T-cell (primary cell): ENCODE measurements at regions of chr10 and their contacts with region 1.

Region 1: GRCh38 chr10:63157845-63158624 is 24.9 kb downstream of the NRBF2 start:
- DNase-seq: peak in 27 of 35 experiments; percentile 2 to 89 (median 31)
- ATAC-seq: peak; percentile 54 to 65 (median 60)
- H3K4me3 ChIP-seq: no peak overlapping the region
- H3K4me3 Mint-ChIP-seq: no peak overlapping the region
- H3K27ac ChIP-seq: no peak overlapping the region
- H3K27ac Mint-ChIP-seq: no peak overlapping the region
- H3K4me1 ChIP-seq: peaks cover 0 to 2% of the 10 kb centered on the region in 2 experiments
- H3K4me1 Mint-ChIP-seq: peaks cover 8 to 13% (median 9%) of the 10 kb centered on the region in 3 donors
- H3K27me3 ChIP-seq: no peaks in the 10 kb centered on the region
- H3K27me3 Mint-ChIP-seq: no peaks in the 10 kb centered on the region

Region 2: GRCh38 chr10:62437696-62438095 is 720.3 kb before region 1 on chr10:
- CTCF ChIA-PET with region 1: interaction called, 32 to 35 read pairs
- POLR2A ChIA-PET with region 1: no interaction called
- DNase-seq: peak in 7 of 35 experiments; percentile 4 to 72 (median 16)
- ATAC-seq: peak in 3 of 4 experiments; percentile 47 to 73 (median 66)
- H3K4me3 ChIP-seq: no peak overlapping the region
- H3K4me3 Mint-ChIP-seq: no peak overlapping the region
- H3K27ac ChIP-seq: no peak overlapping the region
- H3K27ac Mint-ChIP-seq: no peak overlapping the region
- H3K4me1 ChIP-seq: no peaks in the 10 kb centered on the region
- H3K4me1 Mint-ChIP-seq: peaks cover 0 to 12% (median 7%) of the 10 kb centered on the region in 3 donors
- H3K27me3 ChIP-seq: no peaks in the 10 kb centered on the region
- H3K27me3 Mint-ChIP-seq: peaks cover 3 to 4% of the 10 kb centered on the region in 2 donors

Region 3: GRCh38 chr10:62492012-62492869 is 665.8 kb before region 1 on chr10:
- CTCF ChIA-PET with region 1: interaction called, 4 to 10 read pairs
- POLR2A ChIA-PET with region 1: interaction called in 1 of 2 experiments, 6 read pairs
- DNase-seq: peak in 2 of 35 experiments; percentile 1 to 53
- ATAC-seq: peak in 2 of 4 experiments; percentile 35 to 36
- H3K4me3 ChIP-seq: no peak overlapping the region
- H3K4me3 Mint-ChIP-seq: no peak overlapping the region
- H3K27ac ChIP-seq: no peak overlapping the region
- H3K27ac Mint-ChIP-seq: no peak overlapping the region
- H3K4me1 ChIP-seq: no peaks in the 10 kb centered on the region
- H3K4me1 Mint-ChIP-seq: peaks cover 0 to 4% (median 4%) of the 10 kb centered on the region in 3 donors
- H3K27me3 ChIP-seq: no peaks in the 10 kb centered on the region
- H3K27me3 Mint-ChIP-seq: peaks cover 0 to 11% of the 10 kb centered on the region in 2 donors

Region 4: GRCh38 chr10:62610649-62611229 is 547.3 kb before region 1 on chr10:
- CTCF ChIA-PET with region 1: interaction called, 7 to 12 read pairs
- POLR2A ChIA-PET with region 1: no interaction called
- DNase-seq: peak; percentile 39 to 83 (median 64)
- ATAC-seq: peak; percentile 84 to 94 (median 86)
- H3K4me3 ChIP-seq: no peak overlapping the region
- H3K4me3 Mint-ChIP-seq: no peak overlapping the region
- H3K27ac ChIP-seq: no peak overlapping the region
- H3K27ac Mint-ChIP-seq: no peak overlapping the region
- H3K4me1 ChIP-seq: peaks cover 0 to 6% of the 10 kb centered on the region in 2 experiments
- H3K4me1 Mint-ChIP-seq: peaks cover 0 to 6% (median 4%) of the 10 kb centered on the region in 3 donors
- H3K27me3 ChIP-seq: no peaks in the 10 kb centered on the region
- H3K27me3 Mint-ChIP-seq: peaks cover 8 to 10% of the 10 kb centered on the region in 2 donors

Region 5: GRCh38 chr10:63145782-63146181 is 12.3 kb before region 1 on chr10:
- CTCF ChIA-PET with region 1: interaction called, 4 to 32 read pairs
- POLR2A ChIA-PET with region 1: interaction called, 3 to 5 read pairs
- DNase-seq: no peak
- ATAC-seq: no peak
- H3K4me3 ChIP-seq: no peak overlapping the region
- H3K4me3 Mint-ChIP-seq: no peak overlapping the region
- H3K27ac ChIP-seq: no peak overlapping the region
- H3K27ac Mint-ChIP-seq: no peak overlapping the region
- H3K4me1 ChIP-seq: peaks cover 0 to 11% of the 10 kb centered on the region in 2 experiments
- H3K4me1 Mint-ChIP-seq: peaks cover 59 to 68% (median 60%) of the 10 kb centered on the region in 3 donors
- H3K27me3 ChIP-seq: no peaks in the 10 kb centered on the region
- H3K27me3 Mint-ChIP-seq: no peaks in the 10 kb centered on the region

Region 6: GRCh38 chr10:63588436-63589167 is 430.6 kb after region 1 on chr10:
- CTCF ChIA-PET with region 1: no interaction called
- POLR2A ChIA-PET with region 1: no interaction called
- DNase-seq: no peak
- ATAC-seq: no peak
- H3K4me3 ChIP-seq: no peak overlapping the region
- H3K4me3 Mint-ChIP-seq: no peak overlapping the region
- H3K27ac ChIP-seq: no peak overlapping the region
- H3K27ac Mint-ChIP-seq: no peak overlapping the region
- H3K4me1 ChIP-seq: no peaks in the 10 kb centered on the region
- H3K4me1 Mint-ChIP-seq: peaks cover 0 to 4% (median 3%) of the 10 kb centered on the region in 3 donors
- H3K27me3 ChIP-seq: no peaks in the 10 kb centered on the region
- H3K27me3 Mint-ChIP-seq: no peaks in the 10 kb centered on the region

Region 7: DNA sequence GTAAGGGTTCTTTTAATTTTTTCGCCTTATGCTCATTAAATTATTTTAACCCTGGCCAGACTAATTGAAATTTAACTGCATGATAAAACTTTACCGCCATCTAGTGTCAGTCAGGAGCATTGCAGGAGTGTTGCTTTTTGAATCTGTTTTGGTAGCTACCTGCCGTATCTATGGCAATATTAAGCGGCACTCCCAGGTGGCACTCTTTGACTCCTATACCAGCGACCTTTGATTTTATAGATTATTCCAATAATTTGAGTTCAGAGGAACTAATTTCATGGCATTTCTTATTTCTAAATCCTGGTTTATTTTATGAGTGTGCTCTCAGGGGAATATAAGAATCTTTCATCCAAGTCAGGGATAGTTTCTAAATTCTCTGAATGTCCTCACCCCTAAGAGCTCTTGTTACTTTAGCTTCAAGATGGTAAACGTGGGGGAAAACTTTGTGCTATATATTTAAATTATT is 562.1 kb after region 1 on chr10:
- CTCF ChIA-PET with region 1: interaction called, 19 to 35 read pairs
- POLR2A ChIA-PET with region 1: interaction called in 1 of 2 experiments, 8 read pairs
- DNase-seq: peak in 29 of 35 experiments; percentile 7 to 77 (median 29)
- ATAC-seq: peak; percentile 66 to 85 (median 66)
- H3K4me3 ChIP-seq: no peak overlapping the region
- H3K4me3 Mint-ChIP-seq: no peak overlapping the region
- H3K27ac ChIP-seq: no peak overlapping the region
- H3K27ac Mint-ChIP-seq: no peak overlapping the region
- H3K4me1 ChIP-seq: peaks cover 4 to 9% of the 10 kb centered on the region in 2 experiments
- H3K4me1 Mint-ChIP-seq: peaks cover 7 to 11% (median 8%) of the 10 kb centered on the region in 3 donors
- H3K27me3 ChIP-seq: peaks cover 0 to 15% of the 10 kb centered on the region in 2 experiments
- H3K27me3 Mint-ChIP-seq: peaks cover 3 to 8% of the 10 kb centered on the region in 2 donors